ENCODE measurements at regions of chr1 and their contacts with region 1.

Region 1: GRCh38 chr1:54488779-54489626 is 59.0 kb upstream of the ACOT11 start:
- DNase-seq: peak in 1 of 2 donors; percentile 92
- H3K4me3 ChIP-seq: peak overlapping the region; percentile 61 to 81
- H3K27ac ChIP-seq: peak overlapping the region; percentile 92 to 97
- H3K4me1 ChIP-seq: peaks cover 0 to 31% of the 10 kb centered on the region in 2 donors
- H3K27me3 ChIP-seq: no peaks in the 10 kb centered on the region
- CTCF ChIP-seq: peak; percentile 95 to 98 (median 96)

Region 2: DNA sequence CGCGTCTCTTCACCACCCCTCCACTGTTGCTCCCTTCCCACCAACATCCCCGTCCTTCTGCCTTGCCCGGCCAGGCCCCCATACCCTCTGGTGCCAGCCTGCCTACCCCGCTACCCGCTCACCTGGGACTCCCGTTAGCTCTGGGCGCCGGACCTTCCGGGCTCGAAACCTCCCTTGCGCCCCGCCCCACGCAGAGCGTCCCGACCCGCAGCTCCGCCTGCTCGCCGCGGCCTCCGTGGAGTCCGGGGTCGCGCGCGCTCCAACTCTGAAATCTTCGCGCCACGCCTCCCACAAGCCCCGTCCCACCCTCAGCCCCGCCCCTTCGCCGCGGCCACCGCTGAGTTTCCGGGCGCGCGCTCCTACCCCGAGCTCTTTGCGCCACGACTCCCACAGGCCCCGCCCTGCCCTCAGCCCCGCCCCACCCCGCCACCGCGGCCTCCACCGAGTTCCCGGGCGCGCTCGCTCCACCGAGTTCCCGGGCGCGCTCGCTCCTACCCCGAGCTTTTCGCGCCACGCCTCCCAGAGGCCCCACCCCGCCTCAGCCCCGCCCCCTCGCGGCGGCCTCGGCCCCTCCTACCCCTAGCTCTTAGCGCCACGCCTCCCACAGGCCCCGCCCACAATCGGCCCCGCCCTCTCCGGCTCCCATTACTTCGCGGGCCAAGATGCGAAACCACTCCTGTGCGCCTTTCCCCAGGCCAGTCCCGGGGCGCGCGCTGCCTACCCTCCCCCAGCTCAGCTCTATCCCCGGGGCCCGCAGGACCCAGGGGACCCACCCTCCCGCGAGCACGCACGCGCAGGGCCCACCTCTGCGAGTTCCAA is 543.4 kb before region 1 on chr1 and contains the start of gene IFT25:
- intact Hi-C with region 1: loop called (anchors 5 kb)
- DNase-seq: peak; percentile 87 to 98
- H3K4me3 ChIP-seq: peak within 1 kb of the TSS; percentile 80 to 96
- H3K27ac ChIP-seq: peak within 1 kb of the TSS; percentile 77 to 98
- H3K4me1 ChIP-seq: peaks cover 9 to 16% of the 10 kb centered on the region in 2 donors
- H3K27me3 ChIP-seq: no peaks in the 10 kb centered on the region
- CTCF ChIP-seq: no peak
- total RNA-seq, gene IFT25: not detected

Region 3: DNA sequence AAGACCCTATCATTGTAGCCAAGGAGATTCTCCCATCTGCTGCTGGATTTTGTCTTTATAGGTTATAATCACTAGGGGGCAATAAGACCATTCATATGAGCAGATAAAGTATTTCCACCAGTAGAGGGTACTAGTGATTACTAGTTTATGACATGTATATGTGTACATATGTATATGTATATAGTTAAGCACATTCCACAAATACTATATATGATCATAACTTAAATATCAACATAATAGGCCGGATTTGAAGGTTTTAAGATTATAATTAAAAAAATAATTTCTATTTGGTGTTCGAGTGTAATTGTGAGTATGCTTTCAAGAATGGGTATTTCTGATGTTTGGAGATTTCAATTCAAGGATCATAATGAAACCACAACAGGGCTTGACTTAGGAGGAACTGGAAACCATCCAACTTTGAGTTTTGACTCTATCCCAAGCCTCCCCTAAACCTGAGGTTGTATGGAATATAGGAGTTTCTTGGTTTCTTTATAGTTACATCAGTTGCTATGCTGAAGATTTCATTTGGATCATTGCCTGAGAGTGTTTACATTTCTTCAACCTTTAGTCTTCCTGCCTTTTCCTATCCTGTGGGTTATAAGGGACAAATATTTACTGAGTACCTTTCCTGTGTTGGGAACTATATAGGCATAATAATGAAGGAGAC is 418.7 kb before region 1 on chr1:
- intact Hi-C with region 1: loop called (anchors 5 kb)
- DNase-seq: no peak
- H3K4me3 ChIP-seq: no peak overlapping the region
- H3K27ac ChIP-seq: no peak overlapping the region
- H3K4me1 ChIP-seq: no peaks in the 10 kb centered on the region
- H3K27me3 ChIP-seq: no peaks in the 10 kb centered on the region
- CTCF ChIP-seq: peak; percentile 50 to 79 (median 57)

Region 4: GRCh38 chr1:54199765-54200518 is 289.1 kb before region 1 on chr1 and contains the starts of genes CYB5RL and MRPL37:
- intact Hi-C with region 1: loop called (anchors 2 kb)
- DNase-seq: peak; percentile 74 to 96
- H3K4me3 ChIP-seq: peak within 1 kb of the TSS; percentile 73 to 75
- H3K27ac ChIP-seq: peak within 1 kb of the TSS; percentile 44 to 68
- H3K4me1 ChIP-seq: peaks cover 0 to 16% of the 10 kb centered on the region in 2 donors
- H3K27me3 ChIP-seq: no peaks in the 10 kb centered on the region
- CTCF ChIP-seq: no peak
- total RNA-seq, gene CYB5RL: 5.1 TPM
- total RNA-seq, gene MRPL37: 51.2 TPM

Region 5: DNA sequence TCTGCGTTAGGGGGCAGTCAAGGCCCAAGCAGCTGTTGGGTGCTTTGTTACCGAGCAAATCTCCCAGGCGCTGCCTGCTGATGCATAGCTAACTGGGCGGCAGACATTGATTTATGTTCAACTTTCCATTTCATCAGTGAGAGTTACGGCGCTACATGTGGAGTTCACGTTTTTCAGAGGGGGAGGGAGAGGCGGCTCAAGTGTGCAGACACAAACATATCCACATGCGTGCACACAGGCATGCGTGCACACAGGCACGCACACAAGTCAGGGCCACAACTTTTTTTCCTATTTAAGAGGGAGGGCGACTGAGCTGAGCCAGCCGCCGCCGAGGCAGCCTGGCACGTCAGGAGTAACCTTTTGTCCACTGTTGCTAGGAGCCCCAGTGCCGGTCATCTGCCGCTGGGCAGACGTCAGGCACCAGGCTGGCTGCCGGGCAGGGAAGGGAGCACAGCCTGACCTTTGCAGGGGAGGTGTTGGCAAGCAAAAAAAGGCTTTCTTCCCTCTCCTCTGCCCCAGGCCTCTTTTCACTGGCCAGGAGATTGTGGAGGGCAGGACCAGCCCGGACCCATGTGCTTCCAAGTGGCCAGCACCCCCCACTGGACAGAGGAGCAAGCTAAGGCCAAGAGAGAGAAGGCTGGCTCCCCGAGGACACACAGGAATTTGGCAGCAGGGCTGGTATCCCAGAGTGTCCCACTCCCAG is 215.8 kb before region 1 on chr1:
- intact Hi-C with region 1: loop called (anchors 1 kb)
- DNase-seq: peak; percentile 53 to 93
- H3K4me3 ChIP-seq: peak overlapping the region in 1 of 2 donors; percentile 35
- H3K27ac ChIP-seq: peak overlapping the region; percentile 96 to 98
- H3K4me1 ChIP-seq: peaks cover 34 to 55% of the 10 kb centered on the region in 2 donors
- H3K27me3 ChIP-seq: no peaks in the 10 kb centered on the region
- CTCF ChIP-seq: peak; percentile 77 to 84 (median 83)

Region 6: GRCh38 chr1:54547601-54548388 is 58.8 kb after region 1 on chr1 and contains the start of gene ACOT11:
- intact Hi-C with region 1: loop called (anchors 2 kb)
- DNase-seq: peak; percentile 69 to 94
- H3K4me3 ChIP-seq: peak within 1 kb of the TSS; percentile 44 to 59
- H3K27ac ChIP-seq: peak within 1 kb of the TSS; percentile 83 to 92
- H3K4me1 ChIP-seq: peaks cover 18 to 20% of the 10 kb centered on the region in 2 donors
- H3K27me3 ChIP-seq: no peaks in the 10 kb centered on the region
- CTCF ChIP-seq: peak; percentile 58 to 73 (median 70)
- total RNA-seq, gene ACOT11: 30.4 TPM

Measured in ascending aorta (tissue), 2 donors.